IMR-90 (cell line): ENCODE measurements at regions of chr10 and their contacts with region 1.

Region 1: DNA sequence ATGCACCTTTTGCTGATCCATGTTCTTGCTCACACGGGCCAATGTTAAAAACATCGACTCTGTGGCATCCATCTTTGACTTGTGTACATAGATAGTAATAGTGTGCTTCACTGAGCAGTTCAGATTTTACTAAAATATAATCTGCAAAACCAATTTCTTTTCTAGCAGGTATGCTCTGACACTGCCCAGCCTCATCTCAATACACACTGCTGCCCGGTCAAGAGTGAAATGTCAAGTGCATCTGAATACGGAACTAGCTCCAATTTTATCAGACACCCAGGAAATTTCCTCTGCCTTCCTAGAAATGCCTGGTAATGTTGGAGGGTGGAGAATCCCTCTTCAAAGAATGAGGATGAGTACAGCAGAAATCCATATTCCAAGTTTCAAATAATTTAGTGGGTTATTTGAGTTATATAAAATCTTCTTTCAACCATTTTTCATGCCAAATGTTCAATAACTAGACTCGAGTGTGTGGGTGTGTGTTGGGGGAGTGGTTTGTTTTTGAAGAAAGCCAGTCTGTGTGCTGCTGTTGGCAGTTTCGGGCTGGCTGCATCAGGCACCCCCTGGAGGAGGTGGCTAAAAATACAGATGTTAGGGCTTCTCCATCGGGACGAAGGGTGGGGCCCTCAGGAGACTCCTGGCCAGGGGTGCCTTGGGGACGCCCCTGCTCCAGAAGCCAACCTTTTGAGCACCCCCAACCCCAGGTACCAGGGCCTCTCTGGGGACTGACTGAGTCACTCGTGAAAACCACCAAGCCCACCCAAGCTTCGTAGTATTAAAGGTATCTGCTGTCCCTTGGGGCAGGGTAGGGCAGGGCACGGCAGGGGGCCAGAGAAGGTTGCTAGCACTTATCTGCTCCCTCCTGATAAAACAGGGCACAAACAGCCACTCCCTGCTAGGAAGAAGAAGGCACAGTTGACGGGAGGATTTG is 15.4 kb downstream of the CTBP2 start:
- DNase-seq: peak; percentile 57
- ATAC-seq: peak; percentile 57
- H3K4me3 ChIP-seq: no peak overlapping the region
- H3K27ac ChIP-seq: no peak overlapping the region
- H3K4me1 ChIP-seq: peaks cover 38% of the 10 kb centered on the region
- H3K27me3 ChIP-seq: no peaks in the 10 kb centered on the region
- CTCF ChIP-seq: peak; percentile 52
- POLR2A ChIP-seq: no peak
- RAD21 ChIP-seq: peak; percentile 54

Region 2: DNA sequence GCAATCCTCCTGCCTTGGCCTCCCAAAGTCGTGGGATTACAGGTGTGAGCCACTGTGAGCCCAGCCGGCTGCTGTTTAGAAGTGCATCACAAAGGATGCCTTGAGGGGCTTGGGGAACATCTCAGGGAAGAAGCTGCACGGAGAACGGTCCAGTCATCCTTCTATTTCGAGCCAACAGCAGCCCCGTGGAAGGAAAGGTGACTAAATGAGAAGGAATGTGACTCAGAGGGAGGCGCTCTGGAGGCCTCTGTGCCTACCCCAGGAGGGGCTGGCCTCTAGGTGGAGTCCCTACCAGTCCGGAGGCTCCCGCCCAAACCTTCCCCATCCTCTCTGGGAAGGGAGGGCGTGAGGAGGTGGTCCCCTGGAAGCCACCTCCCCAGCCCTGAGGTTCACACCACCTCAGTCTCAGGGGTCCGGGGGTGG is 60.8 kb before region 1 on chr10:
- CTCF ChIA-PET with region 1: interaction called, 3 read pairs
- POLR2A ChIA-PET with region 1: no interaction called
- dilution Hi-C with region 1: no loop called
- in situ Hi-C with region 1: no loop called
- intact Hi-C with region 1: loop called (anchors 2 kb)
- DNase-seq: peak; percentile 97
- ATAC-seq: peak; percentile 81
- H3K4me3 ChIP-seq: no peak overlapping the region
- H3K27ac ChIP-seq: peak overlapping the region; percentile 48
- H3K4me1 ChIP-seq: peaks cover 27% of the 10 kb centered on the region
- H3K27me3 ChIP-seq: no peaks in the 10 kb centered on the region
- CTCF ChIP-seq: peak; percentile 44
- POLR2A ChIP-seq: no peak
- RAD21 ChIP-seq: peak; percentile 44

Region 3: DNA sequence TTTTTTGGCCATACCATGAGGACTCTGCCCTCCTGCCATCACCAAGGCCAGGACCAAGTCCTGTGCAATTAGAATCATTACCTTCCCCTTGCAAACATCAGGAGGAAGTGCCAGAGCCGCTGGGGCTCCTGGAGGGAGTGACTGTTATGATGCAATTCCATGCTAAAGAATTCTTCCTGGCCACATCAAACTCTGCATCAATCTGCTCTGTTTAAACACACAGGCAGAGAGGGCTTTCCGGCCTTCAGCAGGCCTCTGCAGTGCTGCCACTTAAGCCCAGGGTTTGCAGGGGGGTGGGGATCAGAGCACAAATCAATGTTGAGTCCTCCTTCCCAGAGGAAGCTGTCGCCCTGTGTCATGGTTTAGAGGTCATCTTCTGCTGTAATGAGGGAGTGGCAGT is 42.7 kb before region 1 on chr10:
- CTCF ChIA-PET with region 1: no interaction called
- POLR2A ChIA-PET with region 1: no interaction called
- dilution Hi-C with region 1: no loop called
- in situ Hi-C with region 1: no loop called
- intact Hi-C with region 1: loop called (anchors 5 kb)
- DNase-seq: peak; percentile 81
- ATAC-seq: peak; percentile 91
- H3K4me3 ChIP-seq: no peak overlapping the region
- H3K27ac ChIP-seq: peak overlapping the region; percentile 8; the same call in 1 of the 2 replicates
- H3K4me1 ChIP-seq: peaks cover 13% of the 10 kb centered on the region
- H3K27me3 ChIP-seq: no peaks in the 10 kb centered on the region
- CTCF ChIP-seq: no peak
- POLR2A ChIP-seq: no peak
- RAD21 ChIP-seq: no peak; the same call in 1 of the 2 replicates

Region 4: DNA sequence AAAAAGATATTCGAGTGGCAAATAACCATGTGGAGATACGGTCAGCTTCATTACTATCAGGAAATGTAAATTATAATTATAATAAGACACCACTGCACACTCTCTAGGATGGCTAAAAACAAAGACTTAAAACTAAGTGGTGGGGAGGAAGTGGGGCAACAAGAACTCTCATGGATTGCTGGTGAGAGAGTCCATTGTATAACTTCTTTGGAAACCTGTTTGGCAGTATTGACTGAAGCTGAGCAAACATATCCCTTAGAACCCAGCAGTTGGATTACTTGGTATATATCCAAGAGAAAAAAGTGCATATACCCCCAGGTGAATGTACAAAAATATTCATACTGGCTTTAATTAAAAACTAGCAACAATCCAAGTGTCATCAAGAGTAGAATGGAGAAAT is 149.2 kb after region 1 on chr10:
- CTCF ChIA-PET with region 1: no interaction called
- POLR2A ChIA-PET with region 1: no interaction called
- dilution Hi-C with region 1: no loop called
- in situ Hi-C with region 1: no loop called
- intact Hi-C with region 1: no loop called
- DNase-seq: no peak
- ATAC-seq: no peak
- H3K4me3 ChIP-seq: no peak overlapping the region
- H3K27ac ChIP-seq: no peak overlapping the region
- H3K4me1 ChIP-seq: no peaks in the 10 kb centered on the region
- H3K27me3 ChIP-seq: peaks cover 13% of the 10 kb centered on the region
- CTCF ChIP-seq: no peak
- POLR2A ChIP-seq: no peak
- RAD21 ChIP-seq: no peak